ENCODE measurements at regions of chr4 and their contacts with region 1.

Region 1: GRCh38 chr4:8228319-8229250 is 29.5 kb downstream of the SH3TC1 start:
- DNase-seq: peak; percentile 95
- ATAC-seq: peak; percentile 79
- H3K4me3 Mint-ChIP-seq: peak overlapping the region; percentile 15
- H3K27ac Mint-ChIP-seq: peak overlapping the region; percentile 81
- H3K4me1 Mint-ChIP-seq: peaks cover 51% of the 10 kb centered on the region
- H3K27me3 Mint-ChIP-seq: no peaks in the 10 kb centered on the region
- CTCF ChIP-seq: no peak

Region 2: DNA sequence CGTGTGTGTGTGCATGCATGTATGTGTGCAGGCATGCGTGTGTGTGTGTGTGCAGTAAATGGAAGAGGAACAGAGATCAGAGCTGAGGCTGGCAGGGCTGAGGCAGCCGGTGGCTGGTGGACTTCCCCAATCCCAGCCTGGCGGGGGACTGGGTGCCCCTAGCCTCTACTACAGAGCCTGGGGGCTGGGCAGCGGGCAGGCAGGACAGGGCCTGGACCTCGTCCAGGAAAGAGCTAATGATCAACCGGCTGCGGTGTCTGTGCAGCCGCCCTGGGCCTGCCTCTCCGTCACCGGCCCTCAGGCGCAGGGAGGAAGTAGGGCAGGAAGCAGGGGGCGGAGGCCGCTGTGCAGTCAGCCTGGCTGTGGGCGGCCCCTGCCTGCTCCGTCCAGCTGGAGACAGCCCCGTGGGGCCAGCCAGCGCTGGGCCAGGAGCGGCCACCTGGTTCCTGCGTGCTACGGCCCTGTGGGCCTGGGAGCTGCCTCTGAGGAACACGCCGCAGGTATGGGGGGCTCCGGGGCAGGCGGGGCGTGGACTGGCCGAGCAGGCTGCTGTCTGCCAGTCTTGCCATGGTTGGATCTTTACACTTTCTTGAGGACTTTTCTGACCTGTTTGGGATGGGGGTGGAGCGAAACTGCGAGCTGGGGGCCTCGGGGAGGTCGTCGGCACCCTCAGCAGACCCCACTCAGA is 29.5 kb before region 1 on chr4 and contains the start of gene SH3TC1:
- CTCF ChIA-PET with region 1: interaction called, 6 read pairs
- POLR2A ChIA-PET with region 1: interaction called, 23 read pairs
- intact Hi-C with region 1: no loop called
- DNase-seq: peak; percentile 82
- ATAC-seq: peak; percentile 78
- H3K4me3 Mint-ChIP-seq: peak within 1 kb of the TSS; percentile 83
- H3K27ac Mint-ChIP-seq: peak within 1 kb of the TSS; percentile 83
- H3K4me1 Mint-ChIP-seq: peaks cover 47% of the 10 kb centered on the region
- H3K27me3 Mint-ChIP-seq: no peaks in the 10 kb centered on the region
- CTCF ChIP-seq: no peak
- total RNA-seq, gene SH3TC1: 16.2 to 17.5 TPM

Region 3: DNA sequence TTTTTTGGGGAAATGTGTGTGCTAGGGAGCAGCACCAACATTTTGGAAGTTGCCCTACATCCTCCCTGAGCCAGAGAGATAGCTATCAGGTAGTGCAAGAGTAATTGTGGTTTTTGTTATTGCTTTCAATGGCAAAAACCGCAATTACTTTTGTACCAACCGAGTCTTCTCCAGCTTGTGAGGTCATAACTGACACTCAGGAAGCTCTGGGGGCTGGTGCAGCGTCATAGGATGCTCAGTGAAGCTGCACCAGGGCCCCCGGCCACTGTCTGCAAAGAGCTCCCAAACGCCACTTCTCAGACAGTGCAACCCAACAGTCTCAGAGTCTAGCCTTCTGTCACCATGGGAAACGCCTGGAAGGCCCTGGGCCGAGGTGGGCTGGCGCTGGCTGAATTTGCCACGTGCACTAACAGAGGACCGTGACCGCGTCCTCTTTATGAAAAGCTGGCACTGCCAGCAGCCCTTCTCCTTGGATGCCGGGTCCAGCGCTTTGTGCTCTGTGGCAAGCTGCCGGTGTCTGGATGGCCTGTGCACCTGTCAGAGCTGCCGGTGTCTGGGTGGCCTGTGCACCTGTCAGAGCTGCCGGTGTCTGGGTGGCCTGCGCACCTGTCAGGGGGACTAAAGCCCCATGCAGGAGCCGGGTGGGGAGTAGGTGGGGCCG is 10.1 kb before region 1 on chr4:
- CTCF ChIA-PET with region 1: interaction called, 3 read pairs
- POLR2A ChIA-PET with region 1: interaction called, 10 read pairs
- intact Hi-C with region 1: no loop called
- DNase-seq: no peak
- ATAC-seq: no peak
- H3K4me3 Mint-ChIP-seq: no peak overlapping the region
- H3K27ac Mint-ChIP-seq: no peak overlapping the region
- H3K4me1 Mint-ChIP-seq: peaks cover 19% of the 10 kb centered on the region
- H3K27me3 Mint-ChIP-seq: no peaks in the 10 kb centered on the region
- CTCF ChIP-seq: no peak